HepG2 (cell line): ENCODE measurements at regions of chr6 and their contacts with region 1.

Region 1: DNA sequence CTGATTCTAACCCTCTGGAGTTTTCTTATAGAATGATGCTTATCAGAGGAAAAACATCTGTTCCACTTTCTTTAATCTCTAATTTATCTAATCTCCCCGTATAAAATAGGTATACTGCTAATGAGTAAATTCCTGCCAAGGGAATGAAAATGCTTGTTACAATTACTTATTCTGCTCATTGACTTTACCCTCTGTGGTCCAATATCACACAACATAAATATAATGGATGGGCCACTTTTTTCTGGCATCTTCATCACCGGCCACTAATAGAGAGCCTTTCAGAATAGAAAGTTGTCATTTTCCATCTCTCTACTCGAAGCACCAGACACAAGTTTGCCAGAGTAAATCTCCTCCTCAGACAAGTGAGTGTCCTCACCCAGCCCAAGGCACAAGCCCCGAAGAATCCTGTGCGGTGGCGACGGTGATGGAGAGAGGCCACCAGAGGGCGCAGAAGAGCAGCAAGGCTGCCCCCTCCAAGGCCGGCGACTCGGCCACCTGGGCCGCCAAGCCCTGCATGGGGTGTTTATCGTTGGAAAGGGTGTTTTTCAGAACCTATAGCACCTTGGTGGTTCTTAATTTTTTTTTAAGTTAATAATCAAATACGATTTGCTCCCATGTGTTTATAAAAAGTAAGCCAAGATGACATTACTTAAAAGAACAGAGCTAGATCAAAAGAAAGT is 212.9 kb upstream of the ARID1B start:
- DNase-seq: peak; percentile 52
- ATAC-seq: peak; percentile 99
- H3K4me3 ChIP-seq: no peak overlapping the region
- H3K27ac ChIP-seq: no peak overlapping the region
- H3K4me1 ChIP-seq: no peaks in the 10 kb centered on the region
- H3K27me3 ChIP-seq: peaks cover 0 to 15% of the 10 kb centered on the region in 2 experiments; a peak in 2 of 5 replicates
- CTCF ChIP-seq: peak; percentile 95
- EP300 ChIP-seq: no peak
- POLR2A ChIP-seq: no peak
- RAD21 ChIP-seq: peak; percentile 93

Region 2: GRCh38 chr6:156662025-156662445 is 97.8 kb after region 1 on chr6:
- CTCF ChIA-PET with region 1: interaction called, 12 read pairs
- POLR2A ChIA-PET with region 1: no interaction called
- in situ Hi-C with region 1: loop called (anchors 10 kb)
- intact Hi-C with region 1: loop called (anchors 1 kb)
- DNase-seq: peak; percentile 50
- ATAC-seq: peak; percentile 96
- H3K4me3 ChIP-seq: no peak overlapping the region
- H3K27ac ChIP-seq: no peak overlapping the region
- H3K4me1 ChIP-seq: no peaks in the 10 kb centered on the region
- H3K27me3 ChIP-seq: peaks cover 2 to 22% of the 10 kb centered on the region in 2 experiments; a peak in 3 of 5 replicates
- CTCF ChIP-seq: peak; percentile 82
- EP300 ChIP-seq: 0 out of 4 replicates have a peak, but pooled peaks of 1 of the 2 experiments have one; percentile 20
- POLR2A ChIP-seq: no peak
- RAD21 ChIP-seq: peak; percentile 80

Region 3: DNA sequence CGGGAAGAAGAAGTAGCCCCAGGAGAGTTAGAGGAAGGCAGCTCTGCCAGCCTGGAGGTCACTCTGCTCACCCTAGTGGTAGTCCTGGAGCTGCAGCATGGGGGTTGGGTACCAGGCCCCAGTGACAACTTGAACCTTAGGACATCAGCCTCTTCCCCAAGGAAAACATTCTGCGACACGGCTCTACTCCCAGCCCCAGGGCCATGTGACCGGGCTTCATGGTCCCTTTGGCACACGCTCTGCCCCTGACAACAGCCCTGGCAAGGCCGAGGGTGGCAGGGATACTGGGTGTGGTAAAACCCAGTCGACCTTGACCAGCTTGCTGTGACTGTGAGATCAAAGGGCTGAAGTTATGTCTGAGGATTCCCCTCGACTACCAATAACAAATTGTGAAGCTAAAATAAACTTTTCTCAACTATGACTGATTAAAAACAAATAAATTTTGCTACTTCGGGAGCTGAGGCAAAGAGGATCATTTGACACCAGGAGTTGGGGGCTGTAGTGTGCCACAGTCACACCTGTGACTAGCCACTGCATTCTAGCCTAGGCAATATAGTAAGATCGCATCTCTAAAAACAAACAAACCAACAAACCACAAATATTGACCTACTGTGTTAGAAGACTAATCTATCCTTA is 188.5 kb after region 1 on chr6:
- CTCF ChIA-PET with region 1: no interaction called
- POLR2A ChIA-PET with region 1: no interaction called
- in situ Hi-C with region 1: loop called (anchors 25 kb)
- intact Hi-C with region 1: no loop called
- DNase-seq: peak; percentile 24
- ATAC-seq: peak; percentile 95
- H3K4me3 ChIP-seq: peak overlapping the region in 1 of 3 experiments; percentile 23; a peak in 1 of 6 replicates
- H3K27ac ChIP-seq: no peak overlapping the region
- H3K4me1 ChIP-seq: peaks cover 17% of the 10 kb centered on the region
- H3K27me3 ChIP-seq: no peaks in the 10 kb centered on the region; a peak in 1 of 5 replicates
- CTCF ChIP-seq: peak; percentile 52
- EP300 ChIP-seq: no peak
- POLR2A ChIP-seq: no peak
- RAD21 ChIP-seq: no peak

Region 4: GRCh38 chr6:156886409-156886808 is 322.1 kb after region 1 on chr6:
- CTCF ChIA-PET with region 1: no interaction called
- POLR2A ChIA-PET with region 1: no interaction called
- in situ Hi-C with region 1: loop called (anchors 25 kb)
- intact Hi-C with region 1: no loop called
- DNase-seq: no peak
- ATAC-seq: no peak
- H3K4me3 ChIP-seq: no peak overlapping the region
- H3K27ac ChIP-seq: no peak overlapping the region
- H3K4me1 ChIP-seq: no peaks in the 10 kb centered on the region
- H3K27me3 ChIP-seq: no peaks in the 10 kb centered on the region
- CTCF ChIP-seq: no peak
- EP300 ChIP-seq: no peak
- POLR2A ChIP-seq: no peak
- RAD21 ChIP-seq: no peak

Region 5: DNA sequence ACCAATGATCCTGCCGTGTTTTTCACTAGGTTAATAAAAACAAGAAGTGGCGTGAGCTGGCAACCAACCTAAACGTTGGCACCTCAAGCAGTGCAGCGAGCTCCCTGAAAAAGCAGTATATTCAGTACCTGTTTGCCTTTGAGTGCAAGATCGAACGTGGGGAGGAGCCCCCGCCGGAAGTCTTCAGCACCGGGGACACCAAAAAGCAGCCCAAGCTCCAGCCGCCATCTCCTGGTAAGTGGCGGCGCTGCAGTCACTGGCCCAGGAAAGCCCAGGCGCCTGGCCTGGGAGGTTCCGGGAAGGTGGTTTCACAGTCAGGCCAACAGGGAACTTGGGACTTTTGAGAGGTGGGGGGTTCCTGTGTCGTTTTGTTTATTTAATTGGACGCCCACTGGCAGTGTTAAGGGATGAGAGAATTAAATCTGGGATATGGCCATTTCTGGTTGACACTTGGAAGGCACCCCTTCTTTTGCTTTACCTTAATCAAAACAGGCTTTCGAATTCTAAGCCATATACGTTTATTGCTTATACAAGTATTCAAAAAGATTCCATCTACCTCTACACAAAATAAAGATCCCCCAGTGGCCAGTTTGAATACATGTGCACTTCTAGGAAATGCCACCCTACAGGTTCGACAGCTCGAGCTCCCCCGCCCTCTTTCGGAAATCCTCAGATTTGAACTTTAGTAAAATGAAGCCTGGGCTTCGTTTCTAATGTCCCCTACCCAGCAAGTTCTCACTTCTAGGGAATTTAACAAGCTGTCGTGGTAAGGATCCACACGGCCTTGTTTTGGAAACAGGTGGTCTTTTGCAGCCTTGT is 620.1 kb after region 1 on chr6:
- CTCF ChIA-PET with region 1: interaction called, 7 read pairs
- POLR2A ChIA-PET with region 1: no interaction called
- in situ Hi-C with region 1: loop called (anchors 25 kb)
- intact Hi-C with region 1: loop called (anchors 2 kb)
- DNase-seq: peak; percentile 69
- ATAC-seq: peak; percentile 95
- H3K4me3 ChIP-seq: no peak overlapping the region
- H3K27ac ChIP-seq: no peak overlapping the region
- H3K4me1 ChIP-seq: peaks cover 26% of the 10 kb centered on the region
- H3K27me3 ChIP-seq: no peaks in the 10 kb centered on the region
- CTCF ChIP-seq: peak; percentile 91
- EP300 ChIP-seq: no peak
- POLR2A ChIP-seq: no peak
- RAD21 ChIP-seq: peak; percentile 93